ENCODE measurements at regions of chr19 and their contacts with region 1.

Region 1: DNA sequence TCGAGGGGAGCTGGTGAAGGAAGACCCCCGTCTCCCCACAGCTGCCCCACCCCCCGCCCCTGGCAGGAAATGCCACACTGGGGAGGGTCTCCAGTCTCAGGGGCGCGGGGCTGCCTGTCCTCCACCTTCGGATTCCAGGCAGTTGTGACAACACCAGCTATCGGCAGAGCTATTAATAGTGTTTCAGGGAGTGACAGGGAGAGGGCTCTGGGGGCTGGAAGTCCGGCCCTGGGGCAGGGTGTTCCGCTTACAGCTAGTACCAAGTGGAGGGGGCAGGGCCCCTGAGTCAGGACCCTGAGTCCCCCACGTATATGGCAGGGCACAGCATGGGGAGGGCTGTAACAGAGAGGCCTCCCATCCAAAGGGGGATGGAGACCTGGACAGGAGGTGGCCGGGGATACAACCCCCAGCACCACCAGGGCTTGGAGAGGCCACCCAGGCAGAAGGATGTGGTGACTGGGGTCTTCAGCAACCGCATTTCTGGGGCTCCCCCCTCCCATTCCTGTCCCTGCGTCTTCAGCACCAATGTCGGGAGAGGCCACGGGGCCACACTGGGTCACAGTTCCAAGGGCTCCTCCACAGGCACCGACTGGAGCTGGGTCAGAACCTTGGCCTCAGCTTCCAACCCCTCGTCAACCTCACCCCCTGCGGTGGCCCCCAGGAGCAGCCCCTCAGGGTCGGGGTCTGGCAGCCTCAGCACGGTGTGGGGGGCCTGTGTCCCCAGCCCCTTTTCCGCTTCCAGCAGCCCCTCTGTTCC is 3.9 kb downstream of the SIX5 start:
- DNase-seq: no peak
- ATAC-seq: no peak
- H3K4me3 ChIP-seq: no peak overlapping the region
- H3K4me3 Mint-ChIP-seq: no peak overlapping the region
- H3K27ac ChIP-seq: no peak overlapping the region
- H3K27ac Mint-ChIP-seq: no peak overlapping the region
- H3K4me1 ChIP-seq: peaks cover 14% of the 10 kb centered on the region
- H3K4me1 Mint-ChIP-seq: peaks cover 12% of the 10 kb centered on the region
- H3K27me3 ChIP-seq: peaks cover 0 to 9% of the 10 kb centered on the region in 2 experiments
- H3K27me3 Mint-ChIP-seq: peaks cover 5% of the 10 kb centered on the region
- CTCF ChIP-seq: no peak

Region 2: GRCh38 chr19:44164673-44165512 is 1600.2 kb before region 1 on chr19 and contains the start of gene ZNF226:
- CTCF ChIA-PET with region 1: no interaction called
- POLR2A ChIA-PET with region 1: no interaction called
- intact Hi-C with region 1: no loop called
- DNase-seq: peak; percentile 61 to 95 (median 82)
- ATAC-seq: peak; percentile 92
- H3K4me3 ChIP-seq: peak within 1 kb of the TSS; percentile 72 to 79
- H3K4me3 Mint-ChIP-seq: peak within 1 kb of the TSS; percentile 98
- H3K27ac ChIP-seq: peak within 1 kb of the TSS; percentile 69 to 90
- H3K27ac Mint-ChIP-seq: peak within 1 kb of the TSS; percentile 99
- H3K4me1 ChIP-seq: peaks cover 10% of the 10 kb centered on the region
- H3K4me1 Mint-ChIP-seq: peaks cover 31% of the 10 kb centered on the region
- H3K27me3 ChIP-seq: no peaks in the 10 kb centered on the region
- H3K27me3 Mint-ChIP-seq: no peaks in the 10 kb centered on the region
- CTCF ChIP-seq: no peak
- total RNA-seq, gene ZNF226: 9.1 to 10.8 TPM

Region 3: GRCh38 chr19:45264781-45265317 is 500.3 kb before region 1 on chr19:
- CTCF ChIA-PET with region 1: no interaction called
- POLR2A ChIA-PET with region 1: no interaction called
- intact Hi-C with region 1: no loop called
- DNase-seq: no peak
- ATAC-seq: no peak
- H3K4me3 ChIP-seq: no peak overlapping the region
- H3K4me3 Mint-ChIP-seq: no peak overlapping the region
- H3K27ac ChIP-seq: no peak overlapping the region
- H3K27ac Mint-ChIP-seq: no peak overlapping the region
- H3K4me1 ChIP-seq: no peaks in the 10 kb centered on the region
- H3K4me1 Mint-ChIP-seq: no peaks in the 10 kb centered on the region
- H3K27me3 ChIP-seq: no peaks in the 10 kb centered on the region
- H3K27me3 Mint-ChIP-seq: no peaks in the 10 kb centered on the region
- CTCF ChIP-seq: no peak

Region 4: DNA sequence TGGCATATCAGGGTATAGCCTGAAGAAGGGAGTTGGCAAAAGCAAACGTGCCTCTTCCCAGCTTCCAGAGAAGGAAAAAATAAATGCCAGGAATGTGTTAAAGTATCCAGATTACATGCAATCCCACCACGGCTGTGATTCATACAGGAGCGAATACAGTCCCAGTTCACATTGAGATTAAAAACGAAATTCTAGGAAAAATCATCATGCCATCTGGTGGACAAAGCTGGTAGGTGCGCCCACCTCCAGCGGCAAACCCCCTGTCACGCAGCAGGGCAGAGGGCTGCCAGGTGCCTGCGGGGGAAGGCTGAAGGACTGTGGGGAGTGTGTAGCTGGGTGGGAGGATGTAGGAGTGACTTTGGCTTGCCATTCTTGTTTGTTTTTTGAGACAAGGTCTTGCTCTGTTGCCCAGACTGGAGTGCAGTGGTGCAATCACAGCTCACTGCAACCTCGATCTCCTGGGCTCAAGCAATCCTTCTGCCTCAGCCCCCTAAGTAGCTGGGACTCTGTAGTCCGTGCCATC is 33.9 kb after region 1 on chr19:
- CTCF ChIA-PET with region 1: interaction called, 313 read pairs
- POLR2A ChIA-PET with region 1: interaction called, 28 read pairs
- intact Hi-C with region 1: loop called (anchors 1 kb)
- DNase-seq: peak; percentile 28 to 80 (median 66)
- ATAC-seq: peak; percentile 97
- H3K4me3 ChIP-seq: no peak overlapping the region
- H3K4me3 Mint-ChIP-seq: no peak overlapping the region
- H3K27ac ChIP-seq: no peak overlapping the region
- H3K27ac Mint-ChIP-seq: no peak overlapping the region
- H3K4me1 ChIP-seq: peaks cover 5% of the 10 kb centered on the region
- H3K4me1 Mint-ChIP-seq: peaks cover 7% of the 10 kb centered on the region
- H3K27me3 ChIP-seq: peaks cover 3 to 12% of the 10 kb centered on the region in 2 experiments
- H3K27me3 Mint-ChIP-seq: peaks cover 26% of the 10 kb centered on the region
- CTCF ChIP-seq: peak; percentile 92

Region 5: DNA sequence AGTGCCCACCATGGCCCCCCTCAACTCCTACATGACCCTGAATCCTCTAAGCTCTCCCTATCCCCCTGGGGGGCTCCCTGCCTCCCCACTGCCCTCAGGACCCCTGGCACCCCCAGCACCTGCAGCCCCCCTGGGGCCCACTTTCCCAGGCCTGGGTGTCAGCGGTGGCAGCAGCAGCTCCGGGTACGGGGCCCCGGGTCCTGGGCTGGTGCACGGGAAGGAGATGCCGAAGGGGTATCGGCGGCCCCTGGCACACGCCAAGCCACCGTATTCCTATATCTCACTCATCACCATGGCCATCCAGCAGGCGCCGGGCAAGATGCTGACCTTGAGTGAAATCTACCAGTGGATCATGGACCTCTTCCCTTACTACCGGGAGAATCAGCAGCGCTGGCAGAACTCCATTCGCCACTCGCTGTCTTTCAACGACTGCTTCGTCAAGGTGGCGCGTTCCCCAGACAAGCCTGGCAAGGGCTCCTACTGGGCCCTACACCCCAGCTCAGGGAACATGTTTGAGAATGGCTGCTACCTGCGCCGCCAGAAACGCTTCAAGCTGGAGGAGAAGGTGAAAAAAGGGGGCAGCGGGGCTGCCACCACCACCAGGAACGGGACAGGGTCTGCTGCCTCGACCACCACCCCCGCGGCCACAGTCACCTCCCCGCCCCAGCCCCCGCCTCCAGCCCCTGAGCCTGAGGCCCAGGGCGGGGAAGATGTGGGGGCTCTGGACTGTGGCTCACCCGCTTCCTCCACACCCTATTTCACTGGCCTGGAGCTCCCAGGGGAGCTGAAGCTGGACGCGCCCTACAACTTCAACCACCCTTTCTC is 107.2 kb after region 1 on chr19:
- CTCF ChIA-PET with region 1: no interaction called
- POLR2A ChIA-PET with region 1: no interaction called
- intact Hi-C with region 1: no loop called
- DNase-seq: no peak
- ATAC-seq: no peak
- H3K4me3 ChIP-seq: no peak overlapping the region
- H3K4me3 Mint-ChIP-seq: no peak overlapping the region
- H3K27ac ChIP-seq: no peak overlapping the region
- H3K27ac Mint-ChIP-seq: no peak overlapping the region
- H3K4me1 ChIP-seq: peaks cover 10% of the 10 kb centered on the region
- H3K4me1 Mint-ChIP-seq: peaks cover 9% of the 10 kb centered on the region
- H3K27me3 ChIP-seq: peaks cover 0 to 7% of the 10 kb centered on the region in 2 experiments
- H3K27me3 Mint-ChIP-seq: peaks cover 21% of the 10 kb centered on the region
- CTCF ChIP-seq: no peak

Measured in CD8-positive, alpha-beta T cell (primary cell).